ENCODE measurements at regions of chr15 and their contacts with region 1.

Region 1: DNA sequence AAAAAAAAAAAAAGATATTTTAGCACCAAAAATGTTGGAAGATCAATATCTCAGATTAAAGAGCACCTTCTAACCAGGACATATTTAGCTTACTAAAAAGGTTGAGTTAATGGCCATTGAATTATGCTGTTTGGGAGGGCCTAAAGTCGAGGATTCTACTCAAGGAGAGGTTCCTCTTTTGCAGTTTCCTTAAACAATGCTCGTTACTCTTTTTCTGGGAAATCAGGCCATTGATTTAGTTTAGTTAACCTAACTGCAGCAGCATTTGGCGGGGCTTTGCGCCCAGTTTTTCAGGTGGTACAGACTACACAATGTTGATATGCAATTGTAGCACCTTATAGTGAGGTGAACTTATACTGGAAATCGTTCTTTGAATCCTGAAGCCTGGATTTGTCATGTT is 6.8 kb downstream of the ABHD2 start:
- DNase-seq: no peak
- ATAC-seq: no peak
- H3K4me3 ChIP-seq: no peak overlapping the region
- H3K27ac ChIP-seq: no peak overlapping the region
- H3K4me1 ChIP-seq: peaks cover 20% of the 10 kb centered on the region
- H3K27me3 ChIP-seq: no peaks in the 10 kb centered on the region
- CTCF ChIP-seq: no peak
- POLR2A ChIP-seq: no peak
- RAD21 ChIP-seq: no peak

Region 2: GRCh38 chr15:88989578-88989977 is 105.5 kb before region 1 on chr15:
- CTCF ChIA-PET with region 1: no interaction called
- POLR2A ChIA-PET with region 1: interaction called, 18 read pairs
- dilution Hi-C with region 1: no loop called
- in situ Hi-C with region 1: no loop called
- intact Hi-C with region 1: no loop called
- DNase-seq: peak; percentile 94
- ATAC-seq: peak; percentile 77
- H3K4me3 ChIP-seq: peak overlapping the region; percentile 2; the same call in 1 of the 2 replicates
- H3K27ac ChIP-seq: peak overlapping the region; percentile 92
- H3K4me1 ChIP-seq: peaks cover 28% of the 10 kb centered on the region
- H3K27me3 ChIP-seq: no peaks in the 10 kb centered on the region
- CTCF ChIP-seq: no peak
- POLR2A ChIP-seq: no peak
- RAD21 ChIP-seq: 0 out of 2 replicates have a peak, but pooled peaks have one; percentile 4

Measured in IMR-90 (cell line).